Panc1 (cell line): ENCODE measurements at regions of chr10 and their contacts with region 1.

Region 1: GRCh38 chr10:54415483-54415882 is 385.5 kb downstream of the PCDH15 start:
- DNase-seq: no peak
- ATAC-seq: no peak
- H3K4me3 ChIP-seq: no peak overlapping the region
- H3K27ac ChIP-seq: no peak overlapping the region
- H3K4me1 ChIP-seq: no peaks in the 10 kb centered on the region
- H3K27me3 ChIP-seq: no peaks in the 10 kb centered on the region
- CTCF ChIP-seq: no peak

Region 2: GRCh38 chr10:53997953-53998352 is 417.5 kb before region 1 on chr10:
- CTCF ChIA-PET with region 1: no interaction called
- POLR2A ChIA-PET with region 1: no interaction called
- in situ Hi-C with region 1: no loop called
- intact Hi-C with region 1: no loop called
- DNase-seq: no peak
- ATAC-seq: no peak
- H3K4me3 ChIP-seq: no peak overlapping the region
- H3K27ac ChIP-seq: no peak overlapping the region
- H3K4me1 ChIP-seq: no peaks in the 10 kb centered on the region
- H3K27me3 ChIP-seq: no peaks in the 10 kb centered on the region
- CTCF ChIP-seq: peak; percentile 47; the same call in 1 of the 2 replicates

Region 3: GRCh38 chr10:54900584-54900983 is 485.1 kb after region 1 on chr10:
- CTCF ChIA-PET with region 1: no interaction called
- POLR2A ChIA-PET with region 1: no interaction called
- in situ Hi-C with region 1: no loop called
- intact Hi-C with region 1: no loop called
- DNase-seq: no peak
- ATAC-seq: no peak
- H3K4me3 ChIP-seq: no peak overlapping the region
- H3K27ac ChIP-seq: no peak overlapping the region
- H3K4me1 ChIP-seq: no peaks in the 10 kb centered on the region
- H3K27me3 ChIP-seq: no peaks in the 10 kb centered on the region
- CTCF ChIP-seq: no peak

Region 4: DNA sequence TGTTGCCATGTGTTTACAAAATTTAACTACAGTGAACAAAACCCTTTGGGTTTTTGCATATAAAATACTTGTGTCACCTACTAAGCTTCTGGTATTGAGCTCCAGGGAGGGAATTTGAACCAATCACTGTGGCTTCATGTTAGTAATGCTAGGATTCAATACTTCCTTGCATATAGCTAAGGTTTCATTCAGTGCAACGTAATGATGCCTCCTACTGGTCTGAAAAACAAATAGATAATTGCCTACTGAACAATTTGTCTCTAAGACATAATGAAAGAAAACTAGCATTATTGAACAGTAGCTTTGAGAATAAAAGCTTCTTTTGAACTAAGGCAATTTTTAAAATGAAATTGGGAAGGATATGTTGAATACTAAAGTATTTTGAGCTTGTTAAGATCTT is 1701.2 kb after region 1 on chr10:
- CTCF ChIA-PET with region 1: no interaction called
- POLR2A ChIA-PET with region 1: no interaction called
- in situ Hi-C with region 1: no loop called
- intact Hi-C with region 1: loop called (anchors 10 kb)
- DNase-seq: no peak
- ATAC-seq: no peak
- H3K4me3 ChIP-seq: no peak overlapping the region
- H3K27ac ChIP-seq: no peak overlapping the region
- H3K4me1 ChIP-seq: no peaks in the 10 kb centered on the region
- H3K27me3 ChIP-seq: no peaks in the 10 kb centered on the region
- CTCF ChIP-seq: peak; percentile 16; the same call in 1 of the 2 replicates